ENCODE measurements at regions of chr1 and their contacts with region 1.

Region 1: GRCh38 chr1:184075055-184076029 is 23.8 kb downstream of the TSEN15 start:
- DNase-seq: peak; percentile 76
- H3K4me3 ChIP-seq: no peak overlapping the region
- H3K27ac ChIP-seq: no peak overlapping the region
- H3K4me1 ChIP-seq: peaks cover 13% of the 10 kb centered on the region
- H3K27me3 ChIP-seq: no peaks in the 10 kb centered on the region

Region 2: DNA sequence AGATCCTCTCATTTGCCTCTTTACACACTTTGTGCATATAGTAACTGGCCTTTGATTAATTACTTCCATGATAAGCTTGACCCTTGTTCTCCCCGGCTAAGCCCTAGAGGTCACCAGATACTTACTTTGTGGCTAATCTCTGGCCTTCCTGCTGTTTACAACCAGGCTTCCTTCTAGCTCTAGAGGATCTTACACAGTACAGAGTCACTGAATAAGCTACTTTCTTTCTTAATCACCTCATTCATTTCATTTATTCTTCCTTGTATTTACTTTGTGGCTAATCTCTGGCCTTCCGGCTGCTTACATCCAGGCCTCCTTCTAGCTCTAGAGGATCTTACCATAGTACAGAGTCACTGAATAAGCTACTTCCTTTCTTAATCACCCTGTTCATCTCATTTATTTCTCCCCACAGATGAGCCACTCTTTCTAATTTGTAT is 167.2 kb after region 1 on chr1:
- in situ Hi-C with region 1: no loop called
- DNase-seq: peak; percentile 58
- H3K4me3 ChIP-seq: no peak overlapping the region
- H3K27ac ChIP-seq: no peak overlapping the region
- H3K4me1 ChIP-seq: peaks cover 13% of the 10 kb centered on the region
- H3K27me3 ChIP-seq: no peaks in the 10 kb centered on the region; the same call in 1 of the 2 replicates

Region 3: DNA sequence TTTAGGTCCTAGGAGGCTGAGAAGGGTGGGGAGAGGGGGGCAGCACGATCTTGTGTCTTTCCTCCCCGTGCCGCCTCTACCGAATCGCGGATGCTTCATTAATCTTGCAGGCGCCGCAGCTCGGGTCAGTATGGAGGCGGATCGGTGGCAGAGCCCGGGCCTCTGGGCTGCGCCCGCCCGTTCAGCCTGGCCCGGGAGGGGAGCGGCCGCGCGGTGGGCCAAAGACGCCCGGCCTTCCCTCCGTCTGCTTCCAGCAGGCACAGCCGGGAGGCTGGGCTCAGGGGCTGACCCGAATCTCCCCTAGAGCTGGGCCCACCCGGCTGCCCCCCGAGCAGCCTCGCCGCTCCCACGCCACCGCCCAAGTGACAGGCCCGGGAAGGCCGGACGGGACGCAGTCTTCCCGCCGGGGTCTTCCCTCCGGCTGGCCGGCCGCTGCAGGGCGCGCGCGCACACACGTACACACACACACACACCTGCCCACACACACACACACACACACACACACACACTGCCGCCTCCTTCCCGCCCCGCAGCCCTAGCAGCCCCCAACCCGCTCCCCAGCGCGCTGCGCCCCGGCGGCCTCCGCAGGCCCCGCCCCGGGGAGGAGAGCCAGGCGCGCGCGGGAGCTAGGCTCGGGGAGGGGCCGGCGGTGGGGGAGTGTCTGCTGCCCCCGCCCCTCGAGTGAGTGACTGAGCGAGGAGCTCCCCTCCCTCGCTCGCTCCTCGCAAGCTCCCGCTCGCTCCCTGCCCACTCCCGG is 311.1 kb after region 1 on chr1 and contains the start of gene C1orf21:
- in situ Hi-C with region 1: loop called (anchors 25 kb)
- DNase-seq: peak; percentile 93
- H3K4me3 ChIP-seq: peak within 1 kb of the TSS; percentile 96
- H3K27ac ChIP-seq: peak within 1 kb of the TSS; percentile 61
- H3K4me1 ChIP-seq: peaks cover 22% of the 10 kb centered on the region
- H3K27me3 ChIP-seq: no peaks in the 10 kb centered on the region
- total RNA-seq, gene C1orf21: 11.6 and 20.0 TPM in 2 replicates

Region 4: GRCh38 chr1:184563308-184563707 is 488.0 kb after region 1 on chr1:
- in situ Hi-C with region 1: loop called (anchors 25 kb)
- DNase-seq: peak; percentile 46
- H3K4me3 ChIP-seq: no peak overlapping the region
- H3K27ac ChIP-seq: no peak overlapping the region
- H3K4me1 ChIP-seq: peaks cover 10% of the 10 kb centered on the region
- H3K27me3 ChIP-seq: no peaks in the 10 kb centered on the region

Measured in GM23248 (cell line).